Breast epithelium (tissue), 4 donors: ENCODE measurements at regions of chr19 and their contacts with region 1.

Region 1: DNA sequence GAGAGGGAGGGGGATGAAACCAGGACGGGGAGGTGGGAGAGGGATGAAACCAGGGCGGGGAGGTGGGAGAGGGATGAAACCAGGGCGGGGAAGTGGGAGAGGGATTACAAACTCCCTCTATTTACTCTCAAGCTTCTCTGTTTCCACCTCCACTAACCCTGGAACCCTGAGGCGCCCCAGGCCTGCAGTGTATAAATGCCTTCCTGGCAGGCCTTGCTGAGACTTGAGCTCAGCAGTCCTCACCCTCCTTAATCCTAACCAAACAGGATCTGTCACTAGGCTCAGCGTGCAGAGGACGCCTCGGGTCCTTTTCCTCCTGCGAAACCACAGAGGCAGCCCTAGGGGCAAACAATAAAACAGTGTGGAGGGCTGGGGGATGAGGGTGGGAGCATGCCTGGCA is 32.1 kb upstream of the OR1M1 start:
- DNase-seq: peak; percentile 28 to 55
- H3K4me3 ChIP-seq: no peak overlapping the region
- H3K27ac ChIP-seq: peak overlapping the region in 1 of 2 donors; percentile 52
- H3K4me1 ChIP-seq: no peaks in the 10 kb centered on the region
- H3K27me3 ChIP-seq: no peaks in the 10 kb centered on the region
- CTCF ChIP-seq: no peak
- POLR2A ChIP-seq: no peak

Region 2: DNA sequence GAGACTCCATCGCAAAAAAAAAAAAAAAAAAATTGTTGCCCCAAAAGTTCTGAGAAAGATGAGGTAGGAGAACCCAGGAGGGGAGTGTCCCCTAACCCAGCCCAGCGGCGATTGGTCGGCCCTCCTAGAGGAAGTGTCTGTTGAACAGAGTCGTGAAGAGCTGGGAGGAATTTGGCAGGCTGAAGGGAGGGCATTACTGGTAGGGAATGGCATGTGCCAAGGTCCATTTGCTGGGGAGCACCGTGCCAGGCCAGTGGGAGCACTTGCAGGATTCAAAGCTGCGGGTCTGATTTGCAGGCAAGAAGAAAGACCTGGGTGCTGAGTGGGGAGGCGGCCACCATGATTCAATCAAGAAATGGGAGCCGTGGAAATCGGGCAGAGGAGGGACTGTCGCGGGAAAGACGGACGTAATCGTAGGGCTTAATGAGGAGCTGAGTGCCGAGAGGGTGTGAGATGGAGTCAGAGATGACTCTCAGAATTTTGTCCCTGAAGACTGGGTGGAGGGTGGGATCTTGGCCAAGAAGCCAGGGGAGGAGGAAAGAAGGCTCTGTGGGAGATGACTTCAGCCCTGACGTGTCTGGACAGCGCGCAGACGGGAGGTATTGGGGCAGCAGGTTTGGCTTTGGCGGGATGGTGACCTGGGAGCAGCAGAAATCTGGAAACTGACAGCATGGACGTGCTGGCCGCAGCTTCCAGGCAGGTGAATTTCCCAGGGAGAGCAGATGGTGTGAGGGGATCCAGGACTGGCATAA is 830.2 kb before region 1 on chr19:
- intact Hi-C with region 1: no loop called
- DNase-seq: peak in 1 of 2 donors; percentile 47
- H3K4me3 ChIP-seq: no peak overlapping the region
- H3K27ac ChIP-seq: peak overlapping the region in 1 of 2 donors; percentile 42
- H3K4me1 ChIP-seq: no peaks in the 10 kb centered on the region
- H3K27me3 ChIP-seq: no peaks in the 10 kb centered on the region
- CTCF ChIP-seq: no peak
- POLR2A ChIP-seq: no peak

Region 3: GRCh38 chr19:9818734-9819589 is 764.2 kb after region 1 on chr19 and contains the start of gene FBXL12:
- intact Hi-C with region 1: loop called (anchors 5 kb)
- DNase-seq: peak; percentile 100
- H3K4me3 ChIP-seq: peak within 1 kb of the TSS; percentile 80 to 97 (median 92)
- H3K27ac ChIP-seq: peak within 1 kb of the TSS; percentile 94 to 96
- H3K4me1 ChIP-seq: no peaks in the 10 kb centered on the region
- H3K27me3 ChIP-seq: no peaks in the 10 kb centered on the region
- CTCF ChIP-seq: no peak
- POLR2A ChIP-seq: peak; percentile 52
- total RNA-seq, gene FBXL12: 18.7 to 27.1 (median 19.7) TPM